Right cardiac atrium (tissue), 5 donors: ENCODE measurements at regions of chr20 and their contacts with region 1.

Region 1: DNA sequence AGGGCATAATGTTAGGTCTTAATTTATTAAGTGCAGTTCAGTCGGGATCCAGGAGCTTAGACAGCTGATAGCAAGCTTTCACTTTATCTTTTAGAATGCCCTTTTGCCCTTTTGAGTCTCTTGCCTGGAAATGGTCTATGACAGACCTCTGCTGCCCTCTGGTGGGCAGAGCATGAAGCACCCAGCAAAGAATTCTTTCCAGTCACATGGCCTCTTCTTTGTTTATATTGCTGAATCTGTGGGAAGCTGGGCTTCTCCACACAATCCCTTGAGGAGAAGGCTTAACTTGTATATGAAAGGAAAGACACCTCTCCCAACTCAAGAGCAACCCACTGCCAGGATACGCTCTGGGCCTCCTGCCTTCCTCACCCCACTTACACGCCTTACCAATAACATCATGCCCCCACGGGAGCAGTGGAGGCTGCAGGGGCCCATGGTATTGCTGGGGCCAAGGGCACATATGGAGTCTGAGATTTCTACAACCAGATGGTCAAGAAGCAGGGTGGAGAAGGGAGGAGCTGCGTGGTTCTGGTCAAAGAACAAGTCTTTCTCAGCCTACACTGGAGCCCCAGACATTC is 20.4 kb downstream of the WFDC3 start:
- DNase-seq: peak; percentile 74 to 90 (median 84)
- ATAC-seq: peak; percentile 77 to 84
- H3K4me3 ChIP-seq: no peak overlapping the region
- H3K27ac ChIP-seq: peak overlapping the region; percentile 7
- H3K4me1 ChIP-seq: peaks cover 3% of the 10 kb centered on the region
- H3K27me3 ChIP-seq: no peaks in the 10 kb centered on the region

Region 2: DNA sequence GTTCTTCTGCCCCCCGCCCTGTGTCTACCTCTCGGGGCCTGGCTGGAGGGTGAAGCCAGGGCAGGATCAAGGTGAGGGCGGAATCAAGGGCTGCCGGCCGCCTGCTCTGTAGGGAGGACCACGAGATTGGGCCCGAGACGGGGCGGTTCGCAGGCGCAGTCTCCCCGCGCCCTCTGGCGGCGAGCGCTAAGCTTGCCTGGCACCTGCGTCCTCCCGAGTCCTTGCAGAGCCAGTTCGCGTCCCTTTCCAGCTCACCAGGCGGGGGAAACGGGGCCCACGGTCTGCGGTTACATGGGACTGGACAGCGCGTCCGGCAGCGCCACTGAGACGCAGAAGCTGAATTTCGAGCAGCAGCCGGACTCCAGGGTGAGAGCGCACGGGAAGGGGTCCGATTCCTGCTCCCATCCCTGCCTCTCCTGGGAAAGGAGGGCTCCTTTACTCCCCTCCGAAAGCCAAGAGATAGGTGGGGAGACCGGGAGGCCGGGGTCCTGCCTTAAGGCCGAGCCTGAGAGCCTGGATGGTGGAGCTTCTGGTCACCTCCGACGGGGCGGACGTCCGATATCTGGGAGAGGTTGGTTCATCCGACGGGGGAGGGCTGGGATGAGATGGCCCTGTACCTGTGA is 459.6 kb before region 1 on chr20:
- intact Hi-C with region 1: loop called (anchors 5 to 10 kb)
- DNase-seq: peak; percentile 64 to 85 (median 82)
- ATAC-seq: peak; percentile 58 to 71
- H3K4me3 ChIP-seq: no peak overlapping the region
- H3K27ac ChIP-seq: no peak overlapping the region
- H3K4me1 ChIP-seq: no peaks in the 10 kb centered on the region
- H3K27me3 ChIP-seq: no peaks in the 10 kb centered on the region

Region 3: DNA sequence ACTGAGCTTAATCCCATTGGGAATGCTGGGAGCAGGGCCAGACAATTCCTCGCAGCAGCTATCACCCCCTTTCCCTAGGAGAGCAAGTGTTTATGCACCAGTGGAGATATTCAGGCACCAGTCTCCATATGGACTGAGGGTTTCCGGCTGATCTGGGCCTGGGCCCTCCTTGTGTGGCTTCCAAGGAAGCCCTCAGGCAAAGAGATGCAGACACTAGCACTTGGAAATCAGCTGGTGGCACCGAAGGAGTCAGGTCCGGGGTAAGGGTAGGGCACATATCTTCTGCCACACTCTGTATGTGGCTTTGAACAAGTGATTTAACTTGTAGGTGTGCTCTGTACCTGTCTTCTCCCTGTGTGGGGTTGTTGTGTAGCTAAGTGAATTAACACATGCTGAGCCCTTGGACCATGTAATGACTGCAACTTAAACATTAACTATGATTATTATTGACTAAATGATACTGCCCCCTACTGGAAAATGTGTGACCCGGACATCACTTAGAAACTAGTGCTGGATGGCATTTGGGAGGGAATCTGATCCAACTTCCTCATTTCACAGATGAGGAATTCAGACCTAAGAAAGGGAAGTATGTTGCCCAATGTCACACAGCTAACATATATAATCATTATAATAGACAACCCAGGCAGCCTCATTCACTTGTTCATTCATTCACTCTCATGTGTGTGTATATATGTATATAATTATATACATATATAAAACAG is 321.0 kb before region 1 on chr20:
- intact Hi-C with region 1: loop called in 3 of 4 experiments (anchors 10 kb)
- DNase-seq: no peak
- ATAC-seq: peak; percentile 43 to 48
- H3K4me3 ChIP-seq: no peak overlapping the region
- H3K27ac ChIP-seq: no peak overlapping the region
- H3K4me1 ChIP-seq: no peaks in the 10 kb centered on the region
- H3K27me3 ChIP-seq: no peaks in the 10 kb centered on the region

Region 4: GRCh38 chr20:45880988-45881788 is 109.9 kb after region 1 on chr20 and contains the start of gene ZSWIM1:
- intact Hi-C with region 1: no loop called
- DNase-seq: peak; percentile 99 to 100 (median 100)
- ATAC-seq: peak; percentile 97
- H3K4me3 ChIP-seq: peak within 1 kb of the TSS; percentile 69
- H3K27ac ChIP-seq: peak within 1 kb of the TSS; percentile 80
- H3K4me1 ChIP-seq: no peaks in the 10 kb centered on the region
- H3K27me3 ChIP-seq: no peaks in the 10 kb centered on the region
- total RNA-seq, gene ZSWIM1: 10.5 to 13.5 (median 11.2) TPM